ENCODE measurements at regions of chr14 and their contacts with region 1.

Region 1: GRCh38 chr14:50599700-50600444 is 39.9 kb downstream of the ATL1 start:
- DNase-seq: peak in 3 of 14 experiments; percentile 32 to 44 (median 44)
- ATAC-seq: no peak
- H3K4me3 ChIP-seq: no peak overlapping the region
- H3K4me3 Mint-ChIP-seq: no peak overlapping the region
- H3K27ac ChIP-seq: no peak overlapping the region
- H3K27ac Mint-ChIP-seq: no peak overlapping the region
- H3K4me1 ChIP-seq: no peaks in the 10 kb centered on the region
- H3K4me1 Mint-ChIP-seq: no peaks in the 10 kb centered on the region
- H3K27me3 ChIP-seq: no peaks in the 10 kb centered on the region
- H3K27me3 Mint-ChIP-seq: no peaks in the 10 kb centered on the region
- CTCF ChIP-seq: peak; percentile 55

Region 2: DNA sequence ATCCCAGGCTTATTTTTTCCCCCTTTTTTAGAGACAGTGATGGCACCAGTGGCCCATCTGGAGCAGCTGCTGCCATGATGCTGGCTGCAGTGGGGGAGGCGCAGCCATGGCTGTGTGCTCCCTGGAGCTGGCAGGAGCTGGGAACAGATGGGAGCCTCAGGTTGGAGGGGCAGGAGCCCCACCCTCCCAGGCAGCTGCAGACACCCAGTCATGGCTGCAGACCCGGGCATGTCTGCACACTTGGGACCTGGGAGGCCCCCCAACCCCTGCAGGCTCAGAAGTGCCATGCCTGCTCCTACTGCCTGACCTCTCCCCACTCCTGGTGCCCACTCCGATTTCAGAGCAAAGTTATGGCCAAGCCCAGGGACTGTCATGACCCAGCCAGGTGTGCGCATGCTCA is 228.3 kb before region 1 on chr14:
- CTCF ChIA-PET with region 1: no interaction called
- POLR2A ChIA-PET with region 1: no interaction called
- intact Hi-C with region 1: no loop called
- DNase-seq: no peak
- ATAC-seq: no peak
- H3K4me3 ChIP-seq: no peak overlapping the region
- H3K4me3 Mint-ChIP-seq: no peak overlapping the region
- H3K27ac ChIP-seq: no peak overlapping the region
- H3K27ac Mint-ChIP-seq: no peak overlapping the region
- H3K4me1 ChIP-seq: no peaks in the 10 kb centered on the region
- H3K4me1 Mint-ChIP-seq: peaks cover 3% of the 10 kb centered on the region
- H3K27me3 ChIP-seq: no peaks in the 10 kb centered on the region
- H3K27me3 Mint-ChIP-seq: no peaks in the 10 kb centered on the region
- CTCF ChIP-seq: no peak

Region 3: GRCh38 chr14:50714450-50715073 is 114.7 kb after region 1 on chr14:
- CTCF ChIA-PET with region 1: interaction called, 3 read pairs
- POLR2A ChIA-PET with region 1: no interaction called
- intact Hi-C with region 1: loop called in 1 of 2 experiments (anchors 5 kb)
- DNase-seq: peak in 4 of 14 experiments; percentile 7 to 42 (median 28)
- ATAC-seq: no peak
- H3K4me3 ChIP-seq: no peak overlapping the region
- H3K4me3 Mint-ChIP-seq: no peak overlapping the region
- H3K27ac ChIP-seq: no peak overlapping the region
- H3K27ac Mint-ChIP-seq: no peak overlapping the region
- H3K4me1 ChIP-seq: no peaks in the 10 kb centered on the region
- H3K4me1 Mint-ChIP-seq: no peaks in the 10 kb centered on the region
- H3K27me3 ChIP-seq: peaks cover 0 to 4% of the 10 kb centered on the region in 2 experiments
- H3K27me3 Mint-ChIP-seq: peaks cover 6% of the 10 kb centered on the region
- CTCF ChIP-seq: peak; percentile 12

Region 4: GRCh38 chr14:50778721-50779483 is 179.0 kb after region 1 on chr14:
- CTCF ChIA-PET with region 1: no interaction called
- POLR2A ChIA-PET with region 1: no interaction called
- intact Hi-C with region 1: loop called (anchors 1 to 5 kb)
- DNase-seq: peak in 1 of 14 experiments; percentile 37
- ATAC-seq: no peak
- H3K4me3 ChIP-seq: no peak overlapping the region
- H3K4me3 Mint-ChIP-seq: no peak overlapping the region
- H3K27ac ChIP-seq: no peak overlapping the region
- H3K27ac Mint-ChIP-seq: peak overlapping the region; percentile 54
- H3K4me1 ChIP-seq: peaks cover 30% of the 10 kb centered on the region
- H3K4me1 Mint-ChIP-seq: peaks cover 77% of the 10 kb centered on the region
- H3K27me3 ChIP-seq: no peaks in the 10 kb centered on the region
- H3K27me3 Mint-ChIP-seq: no peaks in the 10 kb centered on the region
- CTCF ChIP-seq: no peak